ENCODE measurements at regions of chr15 and their contacts with region 1.

Region 1: DNA sequence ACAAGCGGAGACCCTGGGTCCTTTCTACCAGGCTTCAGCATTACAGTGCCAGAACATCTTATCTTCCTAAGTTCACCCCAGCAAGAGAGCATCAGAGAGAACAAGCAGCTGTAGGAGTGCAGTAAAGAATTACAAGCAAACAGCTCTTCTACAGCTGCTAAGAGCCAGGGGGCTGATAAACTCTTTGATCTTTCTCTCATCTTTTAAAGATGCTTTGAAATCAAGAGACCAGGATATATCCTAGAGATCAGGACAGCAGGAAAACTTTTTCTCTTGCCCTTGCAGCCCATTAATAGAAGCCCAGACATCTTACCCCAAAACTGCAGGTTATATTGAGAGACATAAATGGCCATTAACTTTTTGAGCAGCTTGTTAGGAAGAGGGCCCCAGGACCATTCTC is 198.1 kb downstream of the RSL24D1 start:
- DNase-seq: no peak
- ATAC-seq: no peak
- H3K4me3 ChIP-seq: no peak overlapping the region
- H3K27ac ChIP-seq: no peak overlapping the region
- H3K4me1 ChIP-seq: no peaks in the 10 kb centered on the region
- H3K27me3 ChIP-seq: no peaks in the 10 kb centered on the region
- CTCF ChIP-seq: no peak
- POLR2A ChIP-seq: no peak

Region 2: DNA sequence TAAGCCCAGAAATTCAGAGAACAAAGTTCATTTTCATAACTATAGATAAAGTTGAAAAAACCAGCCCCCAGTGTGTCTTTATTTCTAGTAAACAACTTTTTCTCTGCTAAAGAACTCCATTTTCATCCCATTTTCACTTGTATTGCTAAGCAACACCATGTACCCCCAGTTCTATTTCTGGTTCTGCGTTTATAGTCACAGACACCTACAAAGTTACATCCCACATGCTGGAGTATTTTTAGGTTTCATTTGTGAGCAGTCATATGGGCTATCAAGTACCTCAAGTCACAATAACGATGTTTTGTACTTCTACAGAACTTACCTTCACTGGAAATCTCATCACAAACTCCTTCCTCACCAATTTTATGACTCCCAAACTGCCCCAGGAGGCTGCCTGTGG is 38.4 kb before region 1 on chr15:
- intact Hi-C with region 1: no loop called
- DNase-seq: no peak
- ATAC-seq: no peak
- H3K4me3 ChIP-seq: no peak overlapping the region
- H3K27ac ChIP-seq: no peak overlapping the region
- H3K4me1 ChIP-seq: peaks cover 0 to 4% (median 0%) of the 10 kb centered on the region in 12 donors
- H3K27me3 ChIP-seq: no peaks in the 10 kb centered on the region
- CTCF ChIP-seq: no peak
- POLR2A ChIP-seq: no peak

Region 3: GRCh38 chr15:55044162-55044561 is 45.5 kb after region 1 on chr15:
- intact Hi-C with region 1: loop called in 1 of 10 experiments (anchors 5 kb)
- DNase-seq: no peak
- ATAC-seq: no peak
- H3K4me3 ChIP-seq: no peak overlapping the region
- H3K27ac ChIP-seq: no peak overlapping the region
- H3K4me1 ChIP-seq: no peaks in the 10 kb centered on the region
- H3K27me3 ChIP-seq: peaks cover 0 to 4% (median 0%) of the 10 kb centered on the region in 9 donors
- CTCF ChIP-seq: no peak
- POLR2A ChIP-seq: no peak

Measured in heart left ventricle (tissue), 16 donors.